Caco-2 (cell line): ENCODE measurements at regions of chr1 and their contacts with region 1.

Region 1: GRCh38 chr1:204286831-204287421 is 72.8 kb downstream of the PLEKHA6 start:
- DNase-seq: peak; percentile 60 to 65
- H3K4me3 ChIP-seq: peak overlapping the region; percentile 39
- H3K4me3 Mint-ChIP-seq: peak overlapping the region; percentile 70
- H3K27ac Mint-ChIP-seq: peak overlapping the region; percentile 68
- H3K4me1 ChIP-seq: peaks cover 43% of the 10 kb centered on the region
- H3K4me1 Mint-ChIP-seq: peaks cover 51% of the 10 kb centered on the region
- H3K27me3 ChIP-seq: no peaks in the 10 kb centered on the region
- H3K27me3 Mint-ChIP-seq: no peaks in the 10 kb centered on the region
- CTCF ChIP-seq: no peak

Region 2: DNA sequence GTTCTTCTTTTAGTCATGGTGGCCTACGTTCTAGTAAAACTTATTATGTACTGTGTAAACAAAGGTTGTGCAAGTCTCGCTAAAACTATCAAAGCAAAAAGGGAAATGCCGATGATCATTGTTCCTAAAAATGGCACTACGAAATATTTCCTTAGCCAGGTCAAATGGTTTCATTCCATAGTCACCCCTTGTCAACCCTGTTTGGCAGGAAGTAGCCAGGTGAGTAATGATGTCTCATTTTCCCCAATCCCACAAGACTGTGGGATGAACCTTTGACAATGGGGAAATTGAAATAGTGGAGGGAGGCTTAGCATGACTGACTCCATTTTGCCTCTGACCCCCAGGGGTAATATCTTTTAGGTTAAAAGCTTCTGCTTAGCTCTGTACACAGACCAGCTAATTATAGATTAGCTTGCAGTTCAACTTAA is 115.2 kb before region 1 on chr1:
- CTCF ChIA-PET with region 1: no interaction called
- POLR2A ChIA-PET with region 1: no interaction called
- intact Hi-C with region 1: no loop called
- DNase-seq: peak in 1 of 2 experiments; percentile 47
- H3K4me3 ChIP-seq: no peak overlapping the region
- H3K4me3 Mint-ChIP-seq: no peak overlapping the region
- H3K27ac Mint-ChIP-seq: no peak overlapping the region
- H3K4me1 ChIP-seq: peaks cover 11% of the 10 kb centered on the region
- H3K4me1 Mint-ChIP-seq: peaks cover 9% of the 10 kb centered on the region
- H3K27me3 ChIP-seq: no peaks in the 10 kb centered on the region; the same call in 1 of the 2 replicates
- H3K27me3 Mint-ChIP-seq: no peaks in the 10 kb centered on the region
- CTCF ChIP-seq: no peak

Region 3: GRCh38 chr1:204250686-204251030 is 36.3 kb before region 1 on chr1:
- CTCF ChIA-PET with region 1: no interaction called
- POLR2A ChIA-PET with region 1: no interaction called
- intact Hi-C with region 1: no loop called
- DNase-seq: no peak
- H3K4me3 ChIP-seq: no peak overlapping the region
- H3K4me3 Mint-ChIP-seq: no peak overlapping the region
- H3K27ac Mint-ChIP-seq: no peak overlapping the region
- H3K4me1 ChIP-seq: peaks cover 8% of the 10 kb centered on the region; the same call in 1 of the 2 replicates
- H3K4me1 Mint-ChIP-seq: no peaks in the 10 kb centered on the region
- H3K27me3 ChIP-seq: no peaks in the 10 kb centered on the region
- H3K27me3 Mint-ChIP-seq: no peaks in the 10 kb centered on the region
- CTCF ChIP-seq: no peak

Region 4: GRCh38 chr1:204266504-204267034 is 20.4 kb before region 1 on chr1:
- CTCF ChIA-PET with region 1: interaction called, 3 read pairs
- POLR2A ChIA-PET with region 1: no interaction called
- intact Hi-C with region 1: loop called (anchors 2 kb)
- DNase-seq: peak; percentile 79 to 83
- H3K4me3 ChIP-seq: no peak overlapping the region
- H3K4me3 Mint-ChIP-seq: peak overlapping the region; percentile 48
- H3K27ac Mint-ChIP-seq: peak overlapping the region; percentile 72
- H3K4me1 ChIP-seq: peaks cover 20% of the 10 kb centered on the region
- H3K4me1 Mint-ChIP-seq: peaks cover 14% of the 10 kb centered on the region
- H3K27me3 ChIP-seq: no peaks in the 10 kb centered on the region
- H3K27me3 Mint-ChIP-seq: no peaks in the 10 kb centered on the region
- CTCF ChIP-seq: no peak

Region 5: DNA sequence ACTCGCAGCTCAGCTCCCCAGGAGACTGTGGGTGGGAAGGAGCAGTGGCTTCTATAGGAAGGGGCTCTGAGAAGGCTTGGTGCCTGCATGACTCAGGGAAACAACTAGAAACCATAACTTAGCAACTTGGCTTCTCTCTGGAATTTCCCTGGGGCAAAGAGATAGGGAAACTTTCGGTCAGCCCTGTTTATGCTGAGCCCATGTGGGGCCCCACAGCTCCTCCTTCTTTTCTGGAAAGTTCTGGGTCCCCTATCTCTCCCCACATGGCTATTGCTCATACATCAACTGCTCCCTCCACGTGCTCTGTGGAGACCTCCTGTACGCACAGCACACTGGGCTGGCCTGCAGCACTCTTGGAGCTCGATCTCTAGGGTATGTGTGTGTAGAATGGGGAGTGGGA is 33.5 kb after region 1 on chr1:
- CTCF ChIA-PET with region 1: no interaction called
- POLR2A ChIA-PET with region 1: no interaction called
- intact Hi-C with region 1: loop called (anchors 2 kb)
- DNase-seq: peak; percentile 63 to 72
- H3K4me3 ChIP-seq: no peak overlapping the region
- H3K4me3 Mint-ChIP-seq: no peak overlapping the region
- H3K27ac Mint-ChIP-seq: peak overlapping the region; percentile 83
- H3K4me1 ChIP-seq: peaks cover 67% of the 10 kb centered on the region
- H3K4me1 Mint-ChIP-seq: peaks cover 48% of the 10 kb centered on the region
- H3K27me3 ChIP-seq: no peaks in the 10 kb centered on the region
- H3K27me3 Mint-ChIP-seq: no peaks in the 10 kb centered on the region
- CTCF ChIP-seq: no peak